H1 (cell line): ENCODE measurements at regions of chr11 and their contacts with region 1.

Region 1: DNA sequence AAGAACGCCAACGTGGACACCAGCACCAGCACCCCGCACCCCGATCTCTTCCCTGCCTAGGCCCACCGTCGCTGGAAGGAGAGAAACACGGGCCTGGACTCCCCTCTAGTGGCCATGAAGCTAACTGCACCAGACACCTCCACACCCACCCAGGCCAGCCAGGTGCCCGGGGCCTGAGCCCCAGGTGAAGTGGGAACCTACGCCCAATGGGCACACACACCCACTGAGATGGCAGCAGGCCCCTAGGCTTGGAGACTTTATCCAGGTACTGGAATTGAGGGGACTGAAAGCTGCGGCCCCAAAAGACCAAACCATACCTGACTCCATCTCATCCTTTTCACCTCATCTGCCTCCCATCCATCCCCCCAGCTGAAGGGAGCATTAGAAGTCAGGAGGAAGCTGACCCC is 81.0 kb downstream of the BUD13 start:
- DNase-seq: peak in 1 of 2 experiments; percentile 95
- H3K4me3 ChIP-seq: no peak overlapping the region
- H3K27ac ChIP-seq: no peak overlapping the region
- H3K4me1 ChIP-seq: peaks cover 10 to 26% (median 19%) of the 10 kb centered on the region in 4 experiments
- H3K27me3 ChIP-seq: no peaks in the 10 kb centered on the region; a peak in 1 of 7 replicates
- CTCF ChIP-seq: peak; percentile 93 to 95 (median 93)
- EP300 ChIP-seq: no peak
- POLR2A ChIP-seq: no peak
- RAD21 ChIP-seq: peak; percentile 99

Region 2: GRCh38 chr11:116513894-116514293 is 177.9 kb before region 1 on chr11:
- CTCF ChIA-PET with region 1: interaction called, 51 read pairs
- POLR2A ChIA-PET with region 1: interaction called, 3 read pairs
- DNase-seq: peak; percentile 47 to 89
- H3K4me3 ChIP-seq: no peak overlapping the region
- H3K27ac ChIP-seq: no peak overlapping the region
- H3K4me1 ChIP-seq: peaks cover 0 to 8% (median 2%) of the 10 kb centered on the region in 4 experiments; a peak in 3 of 7 replicates
- H3K27me3 ChIP-seq: peaks cover 0 to 4% (median 0%) of the 10 kb centered on the region in 4 experiments; a peak in 2 of 7 replicates
- CTCF ChIP-seq: peak; percentile 61 to 69 (median 65)
- EP300 ChIP-seq: no peak
- POLR2A ChIP-seq: no peak
- RAD21 ChIP-seq: peak; percentile 62 to 76

Region 3: DNA sequence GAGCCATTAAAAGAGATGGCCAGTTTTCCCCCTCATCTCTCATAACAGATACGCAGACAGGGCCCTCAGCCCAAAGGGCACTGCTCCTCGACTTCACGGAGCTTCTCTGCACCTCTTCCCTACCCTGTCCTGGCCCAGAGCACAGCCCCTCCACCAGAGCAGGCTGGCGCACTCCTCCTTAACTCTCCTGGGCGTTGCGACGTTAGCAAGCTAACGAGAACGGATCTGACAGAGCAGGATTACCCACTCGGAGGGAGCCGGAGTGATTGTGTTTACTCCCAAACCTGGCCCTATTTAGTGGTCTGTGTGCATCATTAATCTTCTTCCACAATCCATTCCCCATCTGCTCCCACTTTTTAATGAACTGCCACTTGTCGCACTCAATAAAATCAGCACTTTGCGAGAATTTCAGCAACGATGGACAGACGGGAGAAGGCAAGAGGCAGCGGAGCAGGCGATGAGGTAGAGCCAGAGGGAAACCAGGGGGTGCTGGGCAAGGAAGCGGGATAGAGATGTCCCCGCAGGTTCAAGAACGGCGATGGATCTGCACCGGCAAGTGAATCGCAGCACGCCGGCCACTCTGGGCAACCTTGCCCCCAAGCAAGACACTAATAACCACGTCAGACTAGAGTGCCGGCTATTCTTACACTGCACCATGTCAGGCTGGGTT is 78.4 kb before region 1 on chr11:
- CTCF ChIA-PET with region 1: interaction called, 28 read pairs
- POLR2A ChIA-PET with region 1: no interaction called
- DNase-seq: no peak
- H3K4me3 ChIP-seq: no peak overlapping the region
- H3K27ac ChIP-seq: no peak overlapping the region
- H3K4me1 ChIP-seq: 0 out of 7 replicates have a peak, but pooled peaks cover 0 to 2% (median 0%) of the 10 kb centered on the region in 4 experiments
- H3K27me3 ChIP-seq: no peaks in the 10 kb centered on the region
- CTCF ChIP-seq: no peak
- EP300 ChIP-seq: no peak
- POLR2A ChIP-seq: no peak
- RAD21 ChIP-seq: no peak

Region 4: DNA sequence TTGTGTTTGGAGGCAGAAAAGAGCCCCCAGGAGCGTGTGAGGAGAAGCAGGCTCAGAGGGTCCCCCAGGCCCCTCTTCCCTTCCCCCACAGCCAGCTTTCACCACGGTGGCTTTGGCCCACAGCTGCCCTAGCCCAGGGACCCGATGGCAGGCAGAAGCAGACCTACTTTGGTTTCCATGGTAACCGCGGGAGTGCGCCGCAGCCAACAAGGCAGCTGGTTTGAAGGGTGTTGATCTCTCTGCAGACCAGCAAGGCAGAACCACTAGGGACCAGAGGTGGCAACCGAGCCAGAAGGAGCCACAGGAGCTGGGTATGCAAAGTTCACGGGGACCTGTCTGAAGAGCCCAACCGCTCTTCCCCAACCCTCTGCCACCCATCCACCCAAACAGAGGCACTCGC is 11.6 kb after region 1 on chr11:
- CTCF ChIA-PET with region 1: interaction called, 11 read pairs
- POLR2A ChIA-PET with region 1: no interaction called
- DNase-seq: peak in 1 of 2 experiments; percentile 76
- H3K4me3 ChIP-seq: no peak overlapping the region
- H3K27ac ChIP-seq: no peak overlapping the region; the same call in 1 of the 2 replicates
- H3K4me1 ChIP-seq: peaks cover 0 to 13% (median 7%) of the 10 kb centered on the region in 4 experiments; a peak in 5 of 7 replicates
- H3K27me3 ChIP-seq: peaks cover 0 to 15% (median 8%) of the 10 kb centered on the region in 4 experiments; a peak in 4 of 7 replicates
- CTCF ChIP-seq: peak in 1 of 3 experiments; percentile 7; a peak in 1 of 4 replicates
- EP300 ChIP-seq: no peak
- POLR2A ChIP-seq: no peak
- RAD21 ChIP-seq: no peak

Region 5: DNA sequence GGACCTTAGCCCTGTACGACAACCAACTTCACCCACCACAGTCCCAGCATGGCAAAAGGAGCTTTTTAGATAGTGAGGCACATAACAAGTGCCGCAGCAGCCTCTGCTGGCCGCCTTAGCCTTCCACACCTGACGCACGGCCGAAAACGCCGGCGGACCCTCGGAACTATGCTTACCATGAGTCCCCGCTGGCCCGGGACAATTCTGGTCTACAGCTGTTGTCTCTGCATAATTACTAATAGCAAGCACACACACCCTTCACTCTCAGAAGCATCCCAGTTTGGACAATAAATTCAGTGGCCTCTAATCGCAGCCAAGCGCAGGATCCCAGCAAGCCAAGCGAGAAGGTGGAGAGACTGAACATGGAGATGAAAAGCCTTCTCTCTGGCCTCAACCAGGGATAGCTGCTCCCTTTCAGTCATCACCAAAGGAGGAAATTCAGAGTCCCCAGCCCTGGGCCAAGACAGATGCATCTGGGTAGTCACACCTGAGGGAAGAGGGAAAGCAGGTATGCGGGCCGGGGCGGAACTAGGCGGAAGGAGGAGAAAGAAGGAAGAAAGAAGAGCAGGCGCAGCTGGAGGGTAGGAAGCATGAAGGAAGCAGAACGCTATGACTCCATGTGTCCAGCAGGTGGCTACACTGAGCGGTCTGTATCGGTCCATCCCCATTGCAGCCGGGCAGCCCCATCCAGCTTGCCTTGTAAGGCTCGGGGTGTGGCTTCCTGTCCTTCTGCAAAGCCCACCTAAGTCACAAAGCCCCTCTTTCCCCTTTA is 40.7 kb after region 1 on chr11:
- CTCF ChIA-PET with region 1: interaction called, 20 read pairs
- POLR2A ChIA-PET with region 1: interaction called, 3 read pairs
- DNase-seq: peak; percentile 62 to 87
- H3K4me3 ChIP-seq: peak overlapping the region; percentile 2 to 51 (median 15); a peak in 5 of 8 replicates
- H3K27ac ChIP-seq: no peak overlapping the region
- H3K4me1 ChIP-seq: peaks cover 6 to 23% (median 16%) of the 10 kb centered on the region in 4 experiments
- H3K27me3 ChIP-seq: no peaks in the 10 kb centered on the region
- CTCF ChIP-seq: peak; percentile 84 to 98 (median 97)
- EP300 ChIP-seq: no peak
- POLR2A ChIP-seq: no peak
- RAD21 ChIP-seq: peak; percentile 74 to 76